ENCODE measurements at regions of chr5 and their contacts with region 1.

Region 1: GRCh38 chr5:106584268-106584667 is 1086.5 kb downstream of the EFNA5 start:
- DNase-seq: no peak
- H3K4me3 ChIP-seq: no peak overlapping the region
- H3K27ac ChIP-seq: no peak overlapping the region
- H3K4me1 ChIP-seq: no peaks in the 10 kb centered on the region
- H3K27me3 ChIP-seq: no peaks in the 10 kb centered on the region
- CTCF ChIP-seq: no peak
- POLR2A ChIP-seq: no peak

Region 2: GRCh38 chr5:106921567-106921966 is 337.3 kb after region 1 on chr5:
- intact Hi-C with region 1: loop called (anchors 5 kb)
- DNase-seq: no peak
- H3K4me3 ChIP-seq: no peak overlapping the region
- H3K27ac ChIP-seq: no peak overlapping the region
- H3K4me1 ChIP-seq: peaks cover 3% of the 10 kb centered on the region
- H3K27me3 ChIP-seq: no peaks in the 10 kb centered on the region
- CTCF ChIP-seq: no peak
- POLR2A ChIP-seq: no peak

Measured in prostate gland (tissue), 2 donors.